IMR-90 (cell line): ENCODE measurements at regions of chr10 and their contacts with region 1.

Region 1: GRCh38 chr10:111221682-111222480 is 145.1 kb downstream of the ADRA2A start:
- DNase-seq: no peak
- ATAC-seq: no peak
- H3K4me3 ChIP-seq: no peak overlapping the region
- H3K27ac ChIP-seq: no peak overlapping the region
- H3K4me1 ChIP-seq: no peaks in the 10 kb centered on the region
- H3K27me3 ChIP-seq: no peaks in the 10 kb centered on the region
- CTCF ChIP-seq: no peak
- POLR2A ChIP-seq: no peak
- RAD21 ChIP-seq: no peak

Region 2: DNA sequence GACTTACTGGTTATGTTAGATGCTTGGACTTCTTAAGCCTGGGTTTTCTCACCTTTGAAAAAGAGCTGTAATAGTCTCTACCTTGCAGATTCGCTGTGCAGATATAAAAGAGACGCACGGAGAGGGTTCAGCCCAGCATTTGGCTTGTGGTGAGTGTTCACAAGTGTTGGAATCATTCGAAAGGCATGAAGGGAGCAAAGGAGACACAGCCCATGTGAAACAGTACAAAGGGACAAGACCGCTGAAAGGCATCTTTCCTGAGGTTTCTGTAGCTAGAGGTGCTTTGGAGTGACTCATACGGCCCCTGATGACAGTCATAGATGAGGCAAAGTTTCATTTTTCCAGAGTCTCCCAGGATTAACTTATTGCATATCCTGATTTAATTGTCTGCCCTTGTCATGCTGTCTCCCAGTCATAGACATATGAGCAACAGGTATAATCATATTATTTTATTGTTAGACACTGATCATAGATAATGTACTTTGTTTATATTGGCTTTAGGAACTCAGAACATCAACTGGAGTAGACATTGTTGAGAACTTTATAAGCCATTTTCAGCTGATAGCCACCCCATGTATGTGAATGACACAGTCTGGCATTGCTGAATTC is 26.0 kb after region 1 on chr10:
- CTCF ChIA-PET with region 1: no interaction called
- POLR2A ChIA-PET with region 1: no interaction called
- dilution Hi-C with region 1: no loop called
- in situ Hi-C with region 1: no loop called
- intact Hi-C with region 1: no loop called
- DNase-seq: no peak
- ATAC-seq: no peak
- H3K4me3 ChIP-seq: no peak overlapping the region
- H3K27ac ChIP-seq: no peak overlapping the region
- H3K4me1 ChIP-seq: no peaks in the 10 kb centered on the region
- H3K27me3 ChIP-seq: no peaks in the 10 kb centered on the region
- CTCF ChIP-seq: no peak
- POLR2A ChIP-seq: no peak
- RAD21 ChIP-seq: no peak

Region 3: GRCh38 chr10:111261081-111261615 is 39.3 kb after region 1 on chr10:
- CTCF ChIA-PET with region 1: no interaction called
- POLR2A ChIA-PET with region 1: no interaction called
- dilution Hi-C with region 1: no loop called
- in situ Hi-C with region 1: no loop called
- intact Hi-C with region 1: loop called (anchors 1 kb)
- DNase-seq: no peak
- ATAC-seq: no peak
- H3K4me3 ChIP-seq: no peak overlapping the region
- H3K27ac ChIP-seq: no peak overlapping the region
- H3K4me1 ChIP-seq: no peaks in the 10 kb centered on the region
- H3K27me3 ChIP-seq: no peaks in the 10 kb centered on the region
- CTCF ChIP-seq: no peak
- POLR2A ChIP-seq: no peak
- RAD21 ChIP-seq: no peak